GM12878 (cell line): ENCODE measurements at regions of chr6 and their contacts with region 1.

Region 1: GRCh38 chr6:137261393-137262160 is 42.4 kb upstream of the IFNGR1 start:
- DNase-seq: peak; percentile 72
- ATAC-seq: peak; percentile 77
- H3K4me3 ChIP-seq: no peak overlapping the region; the same call in 1 of the 2 replicates
- H3K27ac ChIP-seq: peak overlapping the region; percentile 54
- H3K4me1 ChIP-seq: peaks cover 13% of the 10 kb centered on the region
- H3K27me3 ChIP-seq: no peaks in the 10 kb centered on the region
- CTCF ChIP-seq: no peak
- EP300 ChIP-seq: peak; percentile 52 to 84; a peak in 3 of 4 replicates
- POLR2A ChIP-seq: no peak
- RAD21 ChIP-seq: no peak

Region 2: GRCh38 chr6:137171824-137172705 is 89.5 kb before region 1 on chr6:
- CTCF ChIA-PET with region 1: interaction called, 5 read pairs
- POLR2A ChIA-PET with region 1: interaction called, 6 read pairs
- RAD21 ChIA-PET with region 1: interaction called, 25 read pairs
- SMC1A ChIA-PET with region 1: interaction called, 20 read pairs
- in situ Hi-C with region 1: no loop called
- intact Hi-C with region 1: loop called (anchors 5 kb)
- DNase-seq: peak; percentile 68
- ATAC-seq: peak; percentile 86
- H3K4me3 ChIP-seq: 0 out of 2 replicates have a peak overlapping the region, but pooled peaks have one; percentile 1
- H3K27ac ChIP-seq: peak overlapping the region; percentile 84
- H3K4me1 ChIP-seq: peaks cover 51% of the 10 kb centered on the region
- H3K27me3 ChIP-seq: no peaks in the 10 kb centered on the region
- CTCF ChIP-seq: no peak
- EP300 ChIP-seq: peak; percentile 51 to 64; a peak in 1 of 4 replicates
- POLR2A ChIP-seq: 0 out of 2 replicates have a peak, but pooled peaks have one; percentile 31
- RAD21 ChIP-seq: peak; percentile 18; the same call in 1 of the 2 replicates

Region 3: DNA sequence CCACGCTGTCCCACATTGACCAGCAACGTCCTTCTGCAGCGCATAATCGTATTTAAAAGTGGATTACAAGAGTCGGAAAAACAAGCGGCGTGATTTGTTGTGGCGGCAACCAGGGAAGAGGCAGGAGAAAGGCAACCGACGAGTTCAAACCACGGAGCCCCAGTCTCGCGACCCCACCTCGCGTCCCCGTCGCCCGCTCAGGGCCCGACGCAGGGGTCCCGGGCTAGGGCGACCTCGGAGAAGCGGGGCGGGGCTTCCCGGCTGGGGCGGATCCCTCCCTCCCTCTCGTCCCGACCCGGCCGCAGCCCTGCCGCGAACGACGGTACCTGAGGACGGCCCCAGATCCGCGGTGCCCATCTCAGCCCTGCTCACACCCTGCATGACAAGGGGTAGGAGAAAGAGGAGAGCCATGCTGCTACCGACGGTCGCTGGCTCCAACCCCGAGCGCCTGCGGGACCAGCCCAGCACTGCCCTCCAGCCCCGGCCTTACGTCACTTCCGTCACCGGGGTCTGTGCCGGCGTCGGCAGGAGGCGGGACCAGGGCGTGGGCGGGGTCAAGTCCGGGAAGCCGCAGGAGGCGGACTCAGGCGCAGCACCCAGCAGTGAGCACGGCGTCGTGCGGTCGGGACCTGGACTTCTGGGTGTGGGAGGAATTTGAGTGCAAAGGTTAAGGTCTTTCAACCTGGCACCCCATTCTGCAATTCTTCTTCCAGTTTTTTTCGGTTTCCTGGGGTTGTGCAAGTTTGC is 42.5 kb before region 1 on chr6 and contains the start of gene IFNGR1:
- CTCF ChIA-PET with region 1: interaction called, 4 read pairs
- POLR2A ChIA-PET with region 1: interaction called, 4 read pairs
- RAD21 ChIA-PET with region 1: interaction called, 12 read pairs
- SMC1A ChIA-PET with region 1: interaction called, 12 read pairs
- in situ Hi-C with region 1: no loop called
- intact Hi-C with region 1: loop called (anchors 2 kb)
- DNase-seq: peak; percentile 81
- ATAC-seq: peak; percentile 79
- H3K4me3 ChIP-seq: peak within 1 kb of the TSS; percentile 91
- H3K27ac ChIP-seq: peak within 1 kb of the TSS; percentile 94
- H3K4me1 ChIP-seq: peaks cover 15% of the 10 kb centered on the region
- H3K27me3 ChIP-seq: no peaks in the 10 kb centered on the region
- CTCF ChIP-seq: no peak
- EP300 ChIP-seq: no peak
- POLR2A ChIP-seq: peak; percentile 94
- RAD21 ChIP-seq: no peak
- polyA plus RNA-seq, gene IFNGR1: 182 to 296 TPM

Region 4: GRCh38 chr6:137233911-137234863 is 27.4 kb before region 1 on chr6:
- CTCF ChIA-PET with region 1: interaction called, 10 read pairs
- POLR2A ChIA-PET with region 1: interaction called, 7 read pairs
- RAD21 ChIA-PET with region 1: interaction called, 37 read pairs
- SMC1A ChIA-PET with region 1: interaction called, 74 read pairs
- in situ Hi-C with region 1: no loop called
- intact Hi-C with region 1: no loop called
- DNase-seq: no peak
- ATAC-seq: peak; percentile 79
- H3K4me3 ChIP-seq: peak overlapping the region; percentile 28; the same call in 1 of the 2 replicates
- H3K27ac ChIP-seq: peak overlapping the region; percentile 76
- H3K4me1 ChIP-seq: peaks cover 52% of the 10 kb centered on the region
- H3K27me3 ChIP-seq: no peaks in the 10 kb centered on the region
- CTCF ChIP-seq: no peak
- EP300 ChIP-seq: peak in 1 of 2 experiments; percentile 60; a peak in 1 of 4 replicates
- POLR2A ChIP-seq: no peak
- RAD21 ChIP-seq: no peak

Region 5: GRCh38 chr6:137248702-137249101 is 12.9 kb before region 1 on chr6:
- CTCF ChIA-PET with region 1: interaction called, 11 read pairs
- POLR2A ChIA-PET with region 1: interaction called, 20 read pairs
- RAD21 ChIA-PET with region 1: interaction called, 30 read pairs
- SMC1A ChIA-PET with region 1: interaction called, 61 read pairs
- in situ Hi-C with region 1: no loop called
- intact Hi-C with region 1: no loop called
- DNase-seq: no peak
- ATAC-seq: peak; percentile 84
- H3K4me3 ChIP-seq: no peak overlapping the region
- H3K27ac ChIP-seq: peak overlapping the region; percentile 37; the same call in 1 of the 2 replicates
- H3K4me1 ChIP-seq: peaks cover 11% of the 10 kb centered on the region
- H3K27me3 ChIP-seq: no peaks in the 10 kb centered on the region
- CTCF ChIP-seq: no peak
- EP300 ChIP-seq: no peak
- POLR2A ChIP-seq: no peak
- RAD21 ChIP-seq: no peak

Region 6: DNA sequence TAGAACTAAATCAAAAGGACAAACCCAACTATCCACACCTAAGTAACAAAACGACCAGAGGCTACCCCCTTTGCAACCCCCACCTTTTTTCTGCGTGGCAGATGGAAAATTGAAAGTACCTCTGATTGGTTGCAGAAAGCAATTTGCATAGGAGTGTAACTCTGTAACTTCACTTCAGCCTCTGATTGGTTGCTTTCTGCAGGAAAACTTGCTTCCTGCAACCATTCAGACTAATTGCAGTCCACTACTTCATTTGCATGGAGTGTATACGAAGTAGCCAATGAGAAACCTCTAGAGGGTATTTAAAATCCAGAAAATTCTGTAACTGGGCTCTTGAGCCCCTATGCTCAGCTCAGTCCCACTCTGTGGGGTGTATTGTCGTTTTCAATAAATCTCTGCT is 361.7 kb after region 1 on chr6:
- CTCF ChIA-PET with region 1: no interaction called
- POLR2A ChIA-PET with region 1: no interaction called
- RAD21 ChIA-PET with region 1: no interaction called
- SMC1A ChIA-PET with region 1: no interaction called
- in situ Hi-C with region 1: no loop called
- intact Hi-C with region 1: no loop called
- DNase-seq: no peak
- ATAC-seq: no peak
- H3K4me3 ChIP-seq: no peak overlapping the region
- H3K27ac ChIP-seq: no peak overlapping the region
- H3K4me1 ChIP-seq: peaks cover 16% of the 10 kb centered on the region
- H3K27me3 ChIP-seq: no peaks in the 10 kb centered on the region
- CTCF ChIP-seq: no peak
- EP300 ChIP-seq: no peak
- POLR2A ChIP-seq: no peak
- RAD21 ChIP-seq: no peak

Region 7: GRCh38 chr6:137927777-137928218 is 666.2 kb after region 1 on chr6:
- CTCF ChIA-PET with region 1: no interaction called
- POLR2A ChIA-PET with region 1: no interaction called
- RAD21 ChIA-PET with region 1: no interaction called
- SMC1A ChIA-PET with region 1: no interaction called
- in situ Hi-C with region 1: no loop called
- intact Hi-C with region 1: loop called (anchors 10 kb)
- DNase-seq: peak; percentile 99
- ATAC-seq: peak; percentile 93
- H3K4me3 ChIP-seq: peak overlapping the region; percentile 19; the same call in 1 of the 2 replicates
- H3K27ac ChIP-seq: peak overlapping the region; percentile 98
- H3K4me1 ChIP-seq: peaks cover 61% of the 10 kb centered on the region
- H3K27me3 ChIP-seq: no peaks in the 10 kb centered on the region
- CTCF ChIP-seq: no peak
- EP300 ChIP-seq: peak; percentile 91; a peak in 3 of 4 replicates
- POLR2A ChIP-seq: peak; percentile 69; the same call in 1 of the 2 replicates
- RAD21 ChIP-seq: 0 out of 2 replicates have a peak, but pooled peaks have one; percentile 4

Region 8: DNA sequence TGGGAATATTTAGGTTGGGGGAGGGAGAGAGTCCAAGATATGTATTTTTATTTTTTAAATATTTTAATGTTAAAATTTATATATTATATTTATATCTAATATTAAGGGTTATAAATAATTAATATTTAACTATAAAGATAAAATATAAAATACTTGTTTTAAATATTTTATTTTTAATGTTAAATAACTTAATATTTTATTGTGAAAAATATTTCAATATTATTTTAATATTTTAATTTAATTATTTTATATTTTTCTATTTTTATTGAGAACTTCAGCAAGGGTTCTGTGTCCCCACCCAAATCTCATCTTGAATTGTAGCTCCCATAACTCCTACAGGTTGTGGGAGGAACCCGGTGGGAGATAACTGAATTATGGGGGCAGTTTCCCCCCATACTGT is 811.7 kb after region 1 on chr6:
- CTCF ChIA-PET with region 1: no interaction called
- POLR2A ChIA-PET with region 1: no interaction called
- RAD21 ChIA-PET with region 1: no interaction called
- SMC1A ChIA-PET with region 1: no interaction called
- in situ Hi-C with region 1: no loop called
- intact Hi-C with region 1: no loop called
- DNase-seq: no peak
- ATAC-seq: no peak
- H3K4me3 ChIP-seq: no peak overlapping the region
- H3K27ac ChIP-seq: no peak overlapping the region
- H3K4me1 ChIP-seq: no peaks in the 10 kb centered on the region
- H3K27me3 ChIP-seq: no peaks in the 10 kb centered on the region
- CTCF ChIP-seq: no peak
- EP300 ChIP-seq: no peak
- POLR2A ChIP-seq: no peak
- RAD21 ChIP-seq: no peak